IMR-90 (cell line): ENCODE measurements at regions of chr10 and their contacts with region 1.

Region 1: DNA sequence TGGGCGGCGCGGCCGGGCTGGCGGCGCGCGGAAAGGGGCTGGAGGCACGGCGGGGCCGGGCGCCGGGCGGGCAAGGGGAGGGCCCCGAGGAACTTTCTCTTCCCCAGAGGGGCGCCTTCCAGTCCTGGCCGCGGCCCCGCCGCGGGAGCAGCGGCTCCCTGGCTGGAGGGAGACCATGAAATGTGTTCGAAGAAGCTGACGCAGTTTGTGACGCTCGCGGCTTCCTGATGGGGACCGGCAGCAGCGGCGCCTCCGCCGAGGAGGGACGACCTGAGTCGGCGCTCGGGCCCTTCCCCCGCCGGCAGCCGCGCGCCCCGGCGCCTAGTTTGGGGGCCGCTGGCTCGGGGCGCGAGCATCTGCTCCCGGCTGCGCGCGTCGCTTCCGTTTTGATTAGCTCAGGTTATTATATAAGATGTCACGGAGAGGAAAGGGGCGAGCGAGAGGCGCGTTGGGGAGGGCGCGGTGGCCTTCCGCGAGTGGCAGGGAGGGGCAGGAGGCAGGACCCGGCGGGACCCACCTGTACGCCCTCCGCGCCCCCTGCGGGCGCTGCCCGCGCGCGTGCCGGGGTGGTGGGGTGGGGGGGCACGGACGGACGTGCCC is 57.1 kb upstream of the PCGF5 start:
- DNase-seq: peak; percentile 62
- ATAC-seq: peak; percentile 53
- H3K4me3 ChIP-seq: peak overlapping the region; percentile 68
- H3K27ac ChIP-seq: peak overlapping the region; percentile 58
- H3K4me1 ChIP-seq: peaks cover 6% of the 10 kb centered on the region; the same call in 1 of the 2 replicates
- H3K27me3 ChIP-seq: no peaks in the 10 kb centered on the region
- CTCF ChIP-seq: no peak
- POLR2A ChIP-seq: peak; percentile 91
- RAD21 ChIP-seq: no peak

Region 2: GRCh38 chr10:90614631-90615030 is 548.7 kb before region 1 on chr10:
- CTCF ChIA-PET with region 1: no interaction called
- POLR2A ChIA-PET with region 1: no interaction called
- dilution Hi-C with region 1: no loop called
- in situ Hi-C with region 1: no loop called
- intact Hi-C with region 1: no loop called
- DNase-seq: no peak
- ATAC-seq: no peak
- H3K4me3 ChIP-seq: no peak overlapping the region
- H3K27ac ChIP-seq: no peak overlapping the region
- H3K4me1 ChIP-seq: no peaks in the 10 kb centered on the region
- H3K27me3 ChIP-seq: no peaks in the 10 kb centered on the region
- CTCF ChIP-seq: no peak
- POLR2A ChIP-seq: no peak
- RAD21 ChIP-seq: no peak

Region 3: GRCh38 chr10:90885176-90885575 is 278.2 kb before region 1 on chr10:
- CTCF ChIA-PET with region 1: no interaction called
- POLR2A ChIA-PET with region 1: no interaction called
- dilution Hi-C with region 1: no loop called
- in situ Hi-C with region 1: no loop called
- intact Hi-C with region 1: loop called (anchors 10 kb)
- DNase-seq: peak; percentile 85
- ATAC-seq: peak; percentile 86
- H3K4me3 ChIP-seq: no peak overlapping the region
- H3K27ac ChIP-seq: peak overlapping the region; percentile 36
- H3K4me1 ChIP-seq: peaks cover 17% of the 10 kb centered on the region
- H3K27me3 ChIP-seq: no peaks in the 10 kb centered on the region
- CTCF ChIP-seq: no peak
- POLR2A ChIP-seq: no peak
- RAD21 ChIP-seq: no peak

Region 4: DNA sequence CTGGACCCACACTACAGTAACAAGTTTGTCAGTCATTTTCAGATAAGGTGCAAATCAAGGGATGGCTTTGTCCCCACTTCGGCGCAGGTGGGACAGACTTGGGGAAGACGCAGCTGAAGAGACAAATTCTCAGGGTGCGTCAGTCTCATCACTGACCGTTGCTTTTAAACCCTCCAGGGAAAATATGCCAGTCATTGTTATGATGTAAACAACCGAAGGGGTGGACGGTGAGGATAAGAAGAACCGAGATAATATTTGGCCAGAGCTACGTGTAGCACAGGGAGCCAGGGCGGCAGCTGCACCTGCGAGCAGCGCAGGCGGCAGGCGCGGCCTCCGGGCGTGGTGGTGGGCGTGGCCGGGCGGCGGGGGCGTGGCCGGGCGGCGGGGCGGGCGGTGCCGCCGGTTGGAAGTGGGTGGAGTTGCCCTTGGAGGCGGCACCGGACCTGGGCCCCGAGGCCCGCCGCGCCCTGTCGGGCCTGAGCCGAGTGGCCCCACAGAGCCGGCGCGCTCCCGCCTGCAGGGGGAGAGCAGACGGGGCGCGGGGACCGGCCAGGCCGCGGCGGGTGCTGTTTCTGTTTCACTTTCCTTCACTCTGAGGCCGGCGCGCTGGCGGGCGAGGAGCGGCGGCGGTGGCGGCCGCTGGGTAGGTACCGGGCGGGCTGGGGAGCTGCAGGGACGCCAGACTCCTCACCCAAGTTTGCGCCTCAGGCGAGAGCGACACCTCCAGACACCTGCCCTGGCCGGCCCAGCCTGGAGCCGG is 57.0 kb after region 1 on chr10 and contains the start of gene PCGF5:
- CTCF ChIA-PET with region 1: no interaction called
- POLR2A ChIA-PET with region 1: no interaction called
- dilution Hi-C with region 1: no loop called
- in situ Hi-C with region 1: no loop called
- intact Hi-C with region 1: loop called (anchors 2 kb)
- DNase-seq: peak; percentile 85
- ATAC-seq: peak; percentile 99
- H3K4me3 ChIP-seq: peak within 1 kb of the TSS; percentile 95
- H3K27ac ChIP-seq: peak within 1 kb of the TSS; percentile 51; the same call in 1 of the 2 replicates
- H3K4me1 ChIP-seq: peaks cover 8% of the 10 kb centered on the region
- H3K27me3 ChIP-seq: no peaks in the 10 kb centered on the region
- CTCF ChIP-seq: peak; percentile 41
- POLR2A ChIP-seq: peak; percentile 72; the same call in 1 of the 2 replicates
- RAD21 ChIP-seq: peak; percentile 20; the same call in 1 of the 2 replicates
- total RNA-seq, gene PCGF5: 18.1 and 31.9 TPM in 2 replicates